ENCODE measurements at regions of chr17 and their contacts with region 1.

Region 1: GRCh38 chr17:59155439-59156182 is at the start of gene PRR11:
- DNase-seq: peak; percentile 97 to 98 (median 98)
- ATAC-seq: peak; percentile 85
- H3K4me3 ChIP-seq: peak within 1 kb of the TSS; percentile 69
- H3K27ac ChIP-seq: peak within 1 kb of the TSS; percentile 93
- H3K4me1 ChIP-seq: peaks cover 15 to 17% of the 10 kb centered on the region in 2 experiments; a peak in 3 of 5 replicates
- H3K27me3 ChIP-seq: no peaks in the 10 kb centered on the region
- CTCF ChIP-seq: no peak
- EP300 ChIP-seq: no peak
- POLR2A ChIP-seq: peak; percentile 74
- RAD21 ChIP-seq: no peak
- polyA plus RNA-seq, gene PRR11: 28.8 to 34.7 TPM

Region 2: DNA sequence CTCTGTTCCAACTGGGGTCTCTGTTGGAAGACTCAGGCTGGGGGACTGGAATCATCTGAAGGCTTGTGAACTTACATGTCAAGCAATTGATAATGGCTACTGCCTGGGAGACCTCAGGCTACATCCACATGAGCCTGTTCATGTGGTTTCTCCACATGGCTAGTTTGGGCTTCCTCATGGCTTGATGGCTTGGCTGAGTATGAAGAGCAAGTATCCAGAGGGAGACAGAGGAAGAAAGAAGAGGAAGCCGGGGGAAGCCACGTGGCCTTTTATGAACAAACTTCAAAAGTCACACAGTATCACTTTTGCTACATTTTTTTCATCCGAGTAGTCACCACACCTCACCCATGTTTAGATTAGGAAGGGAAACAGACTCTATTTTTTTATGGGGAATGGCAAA is 207.8 kb before region 1 on chr17:
- CTCF ChIA-PET with region 1: no interaction called
- POLR2A ChIA-PET with region 1: no interaction called
- in situ Hi-C with region 1: no loop called
- intact Hi-C with region 1: no loop called
- DNase-seq: no peak
- ATAC-seq: no peak
- H3K4me3 ChIP-seq: no peak overlapping the region
- H3K27ac ChIP-seq: no peak overlapping the region
- H3K4me1 ChIP-seq: no peaks in the 10 kb centered on the region
- H3K27me3 ChIP-seq: no peaks in the 10 kb centered on the region
- CTCF ChIP-seq: no peak
- EP300 ChIP-seq: no peak
- POLR2A ChIP-seq: no peak
- RAD21 ChIP-seq: no peak

Region 3: GRCh38 chr17:59056857-59057256 is 98.8 kb before region 1 on chr17:
- CTCF ChIA-PET with region 1: no interaction called
- POLR2A ChIA-PET with region 1: no interaction called
- in situ Hi-C with region 1: no loop called
- intact Hi-C with region 1: no loop called
- DNase-seq: no peak
- ATAC-seq: no peak
- H3K4me3 ChIP-seq: no peak overlapping the region
- H3K27ac ChIP-seq: no peak overlapping the region
- H3K4me1 ChIP-seq: no peaks in the 10 kb centered on the region
- H3K27me3 ChIP-seq: no peaks in the 10 kb centered on the region
- CTCF ChIP-seq: no peak
- EP300 ChIP-seq: no peak
- POLR2A ChIP-seq: no peak
- RAD21 ChIP-seq: no peak

Region 4: DNA sequence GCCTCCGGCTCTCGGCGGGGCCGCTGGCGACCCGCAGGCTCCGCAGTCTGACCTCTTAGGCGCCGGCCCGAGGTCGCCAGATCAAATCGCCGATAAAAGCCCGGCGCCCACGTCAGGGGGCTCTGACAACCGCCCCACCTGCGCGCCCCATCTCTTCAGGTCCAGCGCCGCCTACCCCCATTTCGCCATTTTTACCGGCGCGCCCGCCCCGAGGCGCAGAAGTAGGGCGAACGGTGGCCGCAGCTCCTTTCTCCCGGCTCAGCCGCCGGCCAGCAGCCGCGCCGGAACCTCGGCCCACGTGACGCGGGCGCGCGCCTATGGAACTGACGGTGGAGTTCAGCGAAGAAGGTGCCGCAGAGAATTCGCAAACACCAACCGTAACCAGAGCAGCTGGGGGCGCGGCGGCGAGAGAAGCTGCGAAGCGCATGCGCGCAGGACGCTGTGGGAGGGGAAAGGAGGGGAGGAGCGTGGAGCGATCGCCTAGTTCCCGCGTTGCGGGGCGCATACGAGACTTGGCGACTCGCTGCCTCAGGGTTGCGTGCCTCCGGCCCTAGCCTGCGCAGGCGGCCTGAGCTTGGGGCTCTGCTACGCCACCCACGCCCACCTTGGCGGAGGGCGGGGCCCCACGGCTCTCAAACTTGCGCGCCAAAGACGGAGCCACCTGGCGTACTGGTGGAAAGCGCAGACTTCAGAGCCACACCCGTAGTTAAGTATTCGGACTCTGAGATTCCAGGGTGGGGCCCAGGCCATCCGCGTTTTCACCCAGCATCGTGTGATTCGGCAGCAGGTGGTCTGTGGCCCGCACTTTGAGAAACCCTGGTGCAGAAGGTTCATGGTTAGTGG is 48.9 kb before region 1 on chr17 and contains the start of gene TRIM37:
- CTCF ChIA-PET with region 1: no interaction called
- POLR2A ChIA-PET with region 1: interaction called, 18 read pairs
- in situ Hi-C with region 1: no loop called
- intact Hi-C with region 1: loop called (anchors 2 kb)
- DNase-seq: peak; percentile 97 to 99 (median 97)
- ATAC-seq: peak; percentile 98
- H3K4me3 ChIP-seq: peak within 1 kb of the TSS; percentile 86
- H3K27ac ChIP-seq: peak within 1 kb of the TSS; percentile 87
- H3K4me1 ChIP-seq: peaks cover 9 to 17% of the 10 kb centered on the region in 2 experiments; a peak in 4 of 5 replicates
- H3K27me3 ChIP-seq: no peaks in the 10 kb centered on the region
- CTCF ChIP-seq: peak in 2 of 3 experiments; percentile 21 to 28; a peak in 3 of 6 replicates
- EP300 ChIP-seq: peak; percentile 10; the same call in 1 of the 2 replicates
- POLR2A ChIP-seq: peak; percentile 88
- RAD21 ChIP-seq: 0 out of 4 replicates have a peak, but pooled peaks of 1 of the 2 experiments have one; percentile 12
- polyA plus RNA-seq, gene TRIM37: 4.5 to 8.6 TPM

Region 5: GRCh38 chr17:59141860-59142259 is 13.8 kb before region 1 on chr17:
- CTCF ChIA-PET with region 1: no interaction called
- POLR2A ChIA-PET with region 1: interaction called, 11 read pairs
- in situ Hi-C with region 1: no loop called
- intact Hi-C with region 1: no loop called
- DNase-seq: no peak
- ATAC-seq: no peak; the same call in 1 of the 3 replicates
- H3K4me3 ChIP-seq: no peak overlapping the region
- H3K27ac ChIP-seq: no peak overlapping the region
- H3K4me1 ChIP-seq: no peaks in the 10 kb centered on the region; a peak in 1 of 5 replicates
- H3K27me3 ChIP-seq: no peaks in the 10 kb centered on the region
- CTCF ChIP-seq: no peak
- EP300 ChIP-seq: no peak
- POLR2A ChIP-seq: no peak
- RAD21 ChIP-seq: no peak

Region 6: DNA sequence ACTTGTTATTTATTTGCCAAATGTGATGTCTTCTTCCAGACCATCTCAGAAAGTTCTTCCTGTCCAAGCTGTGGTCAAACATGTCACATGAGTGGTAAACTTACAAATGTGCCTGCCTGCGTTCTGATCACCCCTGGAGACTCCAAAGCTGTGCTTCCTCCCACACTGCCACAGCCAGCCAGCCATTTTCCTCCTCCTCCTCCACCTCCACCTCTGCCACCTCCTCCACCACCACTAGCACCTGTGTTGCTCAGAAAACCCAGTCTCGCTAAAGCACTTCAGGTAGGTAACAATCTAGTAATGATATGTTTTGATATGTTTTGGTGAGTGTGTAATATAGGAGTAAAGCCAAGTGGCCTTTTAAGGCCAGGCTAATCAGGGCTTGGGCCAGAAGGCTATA is 37.8 kb after region 1 on chr17:
- CTCF ChIA-PET with region 1: no interaction called
- POLR2A ChIA-PET with region 1: no interaction called
- in situ Hi-C with region 1: no loop called
- intact Hi-C with region 1: no loop called
- DNase-seq: no peak
- ATAC-seq: no peak
- H3K4me3 ChIP-seq: no peak overlapping the region
- H3K27ac ChIP-seq: no peak overlapping the region
- H3K4me1 ChIP-seq: no peaks in the 10 kb centered on the region
- H3K27me3 ChIP-seq: no peaks in the 10 kb centered on the region
- CTCF ChIP-seq: no peak
- EP300 ChIP-seq: no peak
- POLR2A ChIP-seq: no peak
- RAD21 ChIP-seq: no peak

Region 7: DNA sequence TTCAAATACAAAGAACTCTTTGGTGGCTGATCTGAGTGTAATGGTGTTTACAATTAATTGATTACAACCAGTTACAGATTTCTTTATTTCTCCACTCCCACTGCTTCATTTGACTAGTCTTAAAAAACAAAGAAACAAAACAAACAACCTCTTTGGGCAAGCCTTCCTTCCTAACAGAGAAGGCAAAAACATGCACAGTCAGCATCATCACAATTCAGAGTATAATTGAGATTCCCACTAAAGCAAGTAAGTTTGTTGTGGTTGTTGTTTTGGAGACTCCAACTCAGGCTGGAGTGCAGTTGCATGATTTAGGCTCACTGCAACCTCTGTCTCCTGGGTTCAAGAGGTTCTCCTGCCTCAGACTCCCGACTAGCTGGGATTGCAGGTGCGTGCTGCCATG is 105.1 kb after region 1 on chr17:
- CTCF ChIA-PET with region 1: no interaction called
- POLR2A ChIA-PET with region 1: no interaction called
- in situ Hi-C with region 1: no loop called
- intact Hi-C with region 1: no loop called
- DNase-seq: no peak
- ATAC-seq: no peak
- H3K4me3 ChIP-seq: no peak overlapping the region
- H3K27ac ChIP-seq: no peak overlapping the region
- H3K4me1 ChIP-seq: peaks cover 0 to 2% of the 10 kb centered on the region in 2 experiments; a peak in 1 of 5 replicates
- H3K27me3 ChIP-seq: no peaks in the 10 kb centered on the region
- CTCF ChIP-seq: no peak
- EP300 ChIP-seq: no peak
- POLR2A ChIP-seq: no peak
- RAD21 ChIP-seq: no peak

Region 8: GRCh38 chr17:59289626-59290301 is 134.2 kb after region 1 on chr17:
- CTCF ChIA-PET with region 1: no interaction called
- POLR2A ChIA-PET with region 1: no interaction called
- in situ Hi-C with region 1: no loop called
- intact Hi-C with region 1: loop called (anchors 5 kb)
- DNase-seq: peak in 3 of 4 experiments; percentile 17 to 22 (median 17)
- ATAC-seq: peak; percentile 62
- H3K4me3 ChIP-seq: peak overlapping the region; percentile 8; the same call in 1 of the 2 replicates
- H3K27ac ChIP-seq: peak overlapping the region; percentile 97
- H3K4me1 ChIP-seq: peaks cover 29 to 31% of the 10 kb centered on the region in 2 experiments
- H3K27me3 ChIP-seq: no peaks in the 10 kb centered on the region
- CTCF ChIP-seq: no peak
- EP300 ChIP-seq: no peak
- POLR2A ChIP-seq: no peak
- RAD21 ChIP-seq: no peak